A549 (cell line): ENCODE measurements at regions of chr2 and their contacts with region 1.

Region 1: GRCh38 chr2:18425210-18425703 is 135.2 kb downstream of the RDH14 start:
- DNase-seq: no peak
- ATAC-seq: no peak
- H3K4me3 ChIP-seq: no peak overlapping the region
- H3K27ac ChIP-seq: no peak overlapping the region
- H3K4me1 ChIP-seq: no peaks in the 10 kb centered on the region
- CTCF ChIP-seq: no peak
- EP300 ChIP-seq: no peak
- POLR2A ChIP-seq: no peak
- RAD21 ChIP-seq: no peak

Region 2: GRCh38 chr2:17593841-17594491 is 831.3 kb before region 1 on chr2:
- CTCF ChIA-PET with region 1: no interaction called
- POLR2A ChIA-PET with region 1: no interaction called
- DNase-seq: no peak
- ATAC-seq: no peak
- H3K4me3 ChIP-seq: no peak overlapping the region
- H3K27ac ChIP-seq: no peak overlapping the region
- H3K4me1 ChIP-seq: no peaks in the 10 kb centered on the region
- CTCF ChIP-seq: no peak
- EP300 ChIP-seq: no peak
- POLR2A ChIP-seq: no peak
- RAD21 ChIP-seq: no peak

Region 3: DNA sequence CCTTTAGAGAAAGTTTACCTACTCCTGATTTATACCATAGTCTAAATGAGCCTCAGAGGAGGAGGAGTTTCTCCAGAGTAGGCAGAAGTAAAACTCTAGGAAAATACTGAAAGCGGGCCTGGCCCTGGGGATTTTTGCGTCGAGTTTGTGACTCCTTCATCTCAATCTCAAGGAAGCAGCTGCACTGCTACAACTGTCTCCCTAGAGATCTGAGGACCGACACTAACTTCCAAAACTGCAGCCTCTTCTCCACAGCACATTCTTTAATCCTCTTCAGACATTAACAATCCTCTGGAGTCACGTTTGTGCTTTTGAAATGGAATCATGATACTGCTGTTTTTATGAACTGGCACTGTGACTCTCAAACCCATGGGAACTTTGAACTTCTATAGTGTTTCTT is 265.4 kb before region 1 on chr2:
- CTCF ChIA-PET with region 1: no interaction called
- POLR2A ChIA-PET with region 1: no interaction called
- DNase-seq: no peak
- ATAC-seq: no peak
- H3K4me3 ChIP-seq: no peak overlapping the region
- H3K27ac ChIP-seq: no peak overlapping the region
- H3K4me1 ChIP-seq: no peaks in the 10 kb centered on the region
- CTCF ChIP-seq: no peak
- EP300 ChIP-seq: no peak
- POLR2A ChIP-seq: no peak
- RAD21 ChIP-seq: no peak

Region 4: GRCh38 chr2:18435421-18436037 is 10.3 kb after region 1 on chr2:
- CTCF ChIA-PET with region 1: interaction called, 18 read pairs
- POLR2A ChIA-PET with region 1: no interaction called
- DNase-seq: peak; percentile 13 to 70
- ATAC-seq: peak; percentile 46 to 84; a peak in 4 of 6 replicates
- H3K4me3 ChIP-seq: no peak overlapping the region
- H3K27ac ChIP-seq: no peak overlapping the region
- H3K4me1 ChIP-seq: no peaks in the 10 kb centered on the region
- CTCF ChIP-seq: peak; percentile 79
- EP300 ChIP-seq: no peak
- POLR2A ChIP-seq: no peak
- RAD21 ChIP-seq: peak; percentile 76 to 81

Region 5: GRCh38 chr2:18445433-18446320 is 20.4 kb after region 1 on chr2:
- CTCF ChIA-PET with region 1: no interaction called
- POLR2A ChIA-PET with region 1: no interaction called
- DNase-seq: no peak
- ATAC-seq: no peak
- H3K4me3 ChIP-seq: no peak overlapping the region
- H3K27ac ChIP-seq: no peak overlapping the region
- H3K4me1 ChIP-seq: no peaks in the 10 kb centered on the region
- CTCF ChIP-seq: no peak
- EP300 ChIP-seq: no peak
- POLR2A ChIP-seq: no peak
- RAD21 ChIP-seq: no peak

Region 6: GRCh38 chr2:18626256-18626668 is 201.0 kb after region 1 on chr2:
- CTCF ChIA-PET with region 1: no interaction called
- POLR2A ChIA-PET with region 1: no interaction called
- DNase-seq: no peak
- ATAC-seq: no peak
- H3K4me3 ChIP-seq: no peak overlapping the region
- H3K27ac ChIP-seq: no peak overlapping the region
- H3K4me1 ChIP-seq: no peaks in the 10 kb centered on the region
- CTCF ChIP-seq: no peak
- EP300 ChIP-seq: no peak
- POLR2A ChIP-seq: no peak
- RAD21 ChIP-seq: no peak